ENCODE measurements at regions of chr3 and their contacts with region 1.

Region 1: GRCh38 chr3:53709860-53710674 is 136.2 kb downstream of the CHDH start:
- DNase-seq: peak; percentile 21
- H3K4me3 ChIP-seq: no peak overlapping the region
- H3K27ac ChIP-seq: no peak overlapping the region
- H3K4me1 ChIP-seq: no peaks in the 10 kb centered on the region
- H3K27me3 ChIP-seq: peaks cover 2% of the 10 kb centered on the region
- CTCF ChIP-seq: peak; percentile 67 to 84

Region 2: DNA sequence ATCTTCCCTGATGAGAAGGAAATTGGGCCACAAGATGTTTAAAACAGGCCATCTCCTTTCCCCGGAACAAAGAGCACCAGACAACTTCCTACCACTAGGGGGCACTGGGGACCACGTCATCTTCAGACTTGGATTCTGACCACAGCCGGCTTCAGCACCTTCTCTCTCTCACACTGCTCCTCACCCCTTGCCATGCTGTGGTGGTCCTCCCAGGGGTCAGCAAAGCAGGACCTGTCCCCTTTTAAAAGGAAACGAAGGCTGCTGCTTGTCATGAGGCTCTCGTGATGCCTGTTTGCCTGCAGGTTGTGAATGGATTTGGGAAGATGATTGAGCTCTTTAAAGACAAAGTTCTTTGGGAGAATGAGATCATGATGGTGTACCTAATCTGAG is 596.1 kb before region 1 on chr3:
- CTCF ChIA-PET with region 1: no interaction called
- dilution Hi-C with region 1: no loop called
- in situ Hi-C with region 1: no loop called
- intact Hi-C with region 1: loop called (anchors 5 kb)
- DNase-seq: peak; percentile 76
- H3K4me3 ChIP-seq: no peak overlapping the region
- H3K27ac ChIP-seq: peak overlapping the region; percentile 50
- H3K4me1 ChIP-seq: peaks cover 41% of the 10 kb centered on the region
- H3K27me3 ChIP-seq: no peaks in the 10 kb centered on the region
- CTCF ChIP-seq: peak; percentile 85 to 92

Region 3: DNA sequence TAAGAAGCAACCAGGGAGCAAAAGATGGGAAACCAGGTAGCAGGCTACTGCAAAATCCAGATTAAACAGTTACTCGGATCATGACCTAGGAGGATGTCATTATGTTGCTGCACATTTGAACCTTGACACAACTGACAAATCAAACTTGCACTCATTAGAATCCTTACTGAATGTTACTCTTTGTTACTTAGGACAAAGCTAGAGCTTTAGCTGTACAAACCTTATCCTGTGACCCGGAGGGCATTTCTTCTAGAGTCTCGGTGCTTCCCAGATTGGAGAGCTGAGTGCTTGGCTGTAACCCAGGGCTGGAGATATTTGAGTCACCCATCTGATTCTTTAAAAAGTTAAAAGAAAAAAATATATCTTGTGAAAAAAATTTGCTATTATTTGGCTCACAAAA is 406.1 kb before region 1 on chr3:
- CTCF ChIA-PET with region 1: no interaction called
- dilution Hi-C with region 1: no loop called
- in situ Hi-C with region 1: no loop called
- intact Hi-C with region 1: loop called (anchors 1 kb)
- DNase-seq: no peak
- H3K4me3 ChIP-seq: no peak overlapping the region
- H3K27ac ChIP-seq: no peak overlapping the region
- H3K4me1 ChIP-seq: no peaks in the 10 kb centered on the region
- H3K27me3 ChIP-seq: no peaks in the 10 kb centered on the region
- CTCF ChIP-seq: no peak

Region 4: DNA sequence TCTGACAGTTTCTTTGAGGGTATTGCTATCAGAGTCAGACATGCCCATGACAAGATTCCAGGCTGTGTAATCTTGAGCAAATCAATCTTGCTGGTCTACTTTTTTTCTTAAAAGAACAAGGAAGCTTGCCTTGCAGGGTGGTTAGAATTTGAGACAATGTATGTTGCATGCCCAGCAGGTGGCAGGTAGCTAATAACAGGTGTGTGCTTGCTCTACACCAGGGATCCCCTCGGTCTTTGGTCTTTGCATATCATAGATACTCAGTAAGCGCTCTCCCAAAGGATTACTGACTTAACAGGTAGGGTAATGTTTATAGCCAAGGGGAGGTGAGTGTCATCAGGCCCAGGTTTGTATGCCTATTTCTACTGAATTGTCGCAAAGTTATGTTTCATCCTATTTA is 178.3 kb before region 1 on chr3:
- CTCF ChIA-PET with region 1: no interaction called
- dilution Hi-C with region 1: no loop called
- in situ Hi-C with region 1: no loop called
- intact Hi-C with region 1: loop called (anchors 1 kb)
- DNase-seq: no peak
- H3K4me3 ChIP-seq: no peak overlapping the region
- H3K27ac ChIP-seq: no peak overlapping the region
- H3K4me1 ChIP-seq: no peaks in the 10 kb centered on the region
- H3K27me3 ChIP-seq: peaks cover 4% of the 10 kb centered on the region
- CTCF ChIP-seq: peak; percentile 16 to 51

Region 5: DNA sequence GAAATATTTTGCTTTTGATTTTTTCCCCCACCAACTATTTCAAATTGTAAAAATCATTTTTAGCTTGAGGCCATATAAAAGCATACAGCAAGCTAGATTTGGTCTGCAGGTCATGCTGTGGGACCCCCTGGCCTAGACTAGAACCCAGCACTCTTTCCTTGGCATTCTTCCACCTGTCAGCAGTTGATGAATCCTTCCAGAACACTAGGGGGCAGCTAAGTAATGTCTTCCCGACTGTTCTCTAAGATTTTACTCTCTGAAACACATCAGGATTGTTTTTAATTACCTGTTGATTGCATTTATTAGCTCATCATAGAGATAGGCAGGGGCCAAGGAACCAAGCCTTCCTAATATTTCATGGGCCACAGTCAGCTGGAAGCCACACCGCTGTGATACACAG is 41.2 kb before region 1 on chr3:
- CTCF ChIA-PET with region 1: no interaction called
- dilution Hi-C with region 1: no loop called
- in situ Hi-C with region 1: no loop called
- intact Hi-C with region 1: loop called (anchors 5 kb)
- DNase-seq: no peak
- H3K4me3 ChIP-seq: no peak overlapping the region
- H3K27ac ChIP-seq: no peak overlapping the region
- H3K4me1 ChIP-seq: no peaks in the 10 kb centered on the region
- H3K27me3 ChIP-seq: peaks cover 1% of the 10 kb centered on the region
- CTCF ChIP-seq: peak; percentile 32 to 51

Region 6: DNA sequence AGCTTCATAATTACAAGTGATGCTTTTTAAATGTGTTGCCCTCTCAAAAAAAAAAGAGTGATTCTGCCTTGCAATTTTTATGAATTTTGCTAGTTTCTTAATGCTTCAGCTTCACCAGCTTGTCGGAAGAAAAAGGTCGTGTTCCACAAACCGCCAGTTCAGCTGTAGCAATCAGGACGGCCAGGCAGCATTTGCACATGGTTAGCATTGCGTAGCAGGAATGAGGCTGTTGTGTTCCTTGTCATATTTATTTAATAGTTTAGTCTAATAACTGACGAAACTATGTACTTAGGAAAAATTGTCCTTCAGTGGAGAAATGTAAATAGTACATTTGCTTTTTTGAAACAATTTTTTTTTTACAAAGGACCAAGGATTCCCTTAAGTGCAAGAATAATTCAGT is 246.5 kb after region 1 on chr3:
- CTCF ChIA-PET with region 1: no interaction called
- dilution Hi-C with region 1: no loop called
- in situ Hi-C with region 1: no loop called
- intact Hi-C with region 1: no loop called
- DNase-seq: no peak
- H3K4me3 ChIP-seq: no peak overlapping the region
- H3K27ac ChIP-seq: no peak overlapping the region
- H3K4me1 ChIP-seq: no peaks in the 10 kb centered on the region
- H3K27me3 ChIP-seq: no peaks in the 10 kb centered on the region
- CTCF ChIP-seq: no peak

Measured in mammary epithelial cell (primary cell).